AG04449 (cell line): ENCODE measurements at regions of chr1 and their contacts with region 1.

Region 1: GRCh38 chr1:36450270-36450918 is at the start of gene OSCP1:
- DNase-seq: peak; percentile 73
- H3K4me3 ChIP-seq: peak within 1 kb of the TSS; percentile 79
- CTCF ChIP-seq: no peak

Region 2: DNA sequence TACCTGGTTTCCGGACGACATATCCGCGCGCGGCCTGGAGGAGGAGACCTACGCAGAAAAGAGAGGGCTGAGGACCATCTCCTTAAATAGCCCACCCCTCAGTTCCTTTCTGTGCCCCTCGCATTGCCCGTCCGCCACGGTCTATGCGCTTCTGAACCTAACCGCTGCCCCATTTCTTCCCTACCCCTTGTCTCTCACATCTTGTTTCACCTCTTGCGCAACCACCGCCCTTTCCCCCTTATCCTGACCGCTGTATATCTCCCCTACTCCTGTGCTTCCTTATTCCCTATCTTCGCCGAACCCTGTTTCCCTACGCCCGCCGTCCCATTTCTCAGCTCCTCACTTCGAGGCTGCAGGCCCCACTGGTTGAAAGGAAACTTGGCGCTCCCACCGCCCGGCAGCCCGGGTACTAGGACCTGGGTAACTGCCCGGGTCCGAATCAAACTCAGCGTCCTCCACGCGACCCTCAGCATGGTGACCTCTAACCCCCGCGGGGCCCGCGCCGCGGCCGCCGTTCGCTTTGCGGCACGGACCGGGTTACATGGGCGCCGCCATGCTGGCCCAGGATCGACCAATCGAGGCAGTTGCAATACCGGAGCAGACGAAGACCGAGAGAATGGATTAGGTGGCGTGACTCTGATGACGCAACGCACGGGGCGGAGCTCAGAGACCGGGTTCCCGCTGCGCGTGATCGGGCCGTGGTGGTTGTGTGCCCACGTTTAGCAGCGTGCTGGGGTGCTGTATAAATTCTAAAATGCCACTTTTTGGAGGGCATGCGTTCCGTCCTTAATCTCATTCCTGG is 13.6 kb after region 1 on chr1 and contains the start of gene MRPS15:
- CTCF ChIA-PET with region 1: interaction called, 5 read pairs
- POLR2A ChIA-PET with region 1: interaction called, 16 read pairs
- DNase-seq: peak; percentile 68
- H3K4me3 ChIP-seq: peak within 1 kb of the TSS; percentile 85
- CTCF ChIP-seq: no peak